ENCODE measurements at regions of chr12 and their contacts with region 1.

Region 1: DNA sequence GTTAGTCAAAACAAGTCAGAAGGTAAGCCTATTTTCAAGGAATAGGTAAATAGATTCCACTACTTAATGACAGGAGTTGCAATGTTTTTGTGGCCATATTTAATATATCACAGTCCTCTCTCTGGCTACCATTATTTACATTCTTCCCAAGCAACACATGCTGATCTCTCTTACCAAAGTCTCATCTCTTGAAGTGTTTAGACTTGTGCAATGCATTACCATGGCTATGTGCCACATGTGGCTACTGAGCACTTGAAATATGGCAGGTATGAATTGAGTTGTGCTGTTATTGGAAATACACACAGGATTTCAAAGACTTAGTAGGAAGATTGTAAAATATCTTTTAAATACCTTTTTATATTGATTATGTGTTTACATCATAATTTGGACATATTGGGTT is 262.4 kb upstream of the PDE3A start:
- DNase-seq: no peak
- ATAC-seq: no peak

Region 2: DNA sequence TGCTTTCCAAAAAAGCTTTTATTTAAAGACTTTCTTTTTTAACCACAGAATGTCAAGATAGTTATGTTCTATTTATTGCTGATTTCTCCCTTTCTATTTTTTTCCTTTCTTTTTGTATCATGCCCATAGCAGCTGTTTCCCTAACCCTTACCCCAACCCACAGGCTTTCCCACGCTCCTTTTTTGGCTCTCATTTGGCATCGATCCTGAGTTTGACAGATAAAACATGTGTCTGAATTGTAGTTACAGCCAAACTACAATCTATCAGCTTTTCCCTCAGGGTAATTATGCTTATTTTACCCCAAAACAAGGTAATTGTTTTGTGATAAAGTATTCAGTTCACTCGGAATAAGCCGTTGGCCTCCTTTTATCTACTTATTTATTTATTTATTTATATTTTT is 309.1 kb after region 1 on chr12:
- intact Hi-C with region 1: loop called (anchors 2 kb)
- DNase-seq: no peak
- ATAC-seq: peak; percentile 64

Region 3: GRCh38 chr12:20578142-20578541 is 472.2 kb after region 1 on chr12:
- intact Hi-C with region 1: no loop called
- DNase-seq: no peak
- ATAC-seq: no peak

Measured in sciatic nerve (tissue), 2 donors.